ENCODE measurements at regions of chr17 and their contacts with region 1.

Region 1: DNA sequence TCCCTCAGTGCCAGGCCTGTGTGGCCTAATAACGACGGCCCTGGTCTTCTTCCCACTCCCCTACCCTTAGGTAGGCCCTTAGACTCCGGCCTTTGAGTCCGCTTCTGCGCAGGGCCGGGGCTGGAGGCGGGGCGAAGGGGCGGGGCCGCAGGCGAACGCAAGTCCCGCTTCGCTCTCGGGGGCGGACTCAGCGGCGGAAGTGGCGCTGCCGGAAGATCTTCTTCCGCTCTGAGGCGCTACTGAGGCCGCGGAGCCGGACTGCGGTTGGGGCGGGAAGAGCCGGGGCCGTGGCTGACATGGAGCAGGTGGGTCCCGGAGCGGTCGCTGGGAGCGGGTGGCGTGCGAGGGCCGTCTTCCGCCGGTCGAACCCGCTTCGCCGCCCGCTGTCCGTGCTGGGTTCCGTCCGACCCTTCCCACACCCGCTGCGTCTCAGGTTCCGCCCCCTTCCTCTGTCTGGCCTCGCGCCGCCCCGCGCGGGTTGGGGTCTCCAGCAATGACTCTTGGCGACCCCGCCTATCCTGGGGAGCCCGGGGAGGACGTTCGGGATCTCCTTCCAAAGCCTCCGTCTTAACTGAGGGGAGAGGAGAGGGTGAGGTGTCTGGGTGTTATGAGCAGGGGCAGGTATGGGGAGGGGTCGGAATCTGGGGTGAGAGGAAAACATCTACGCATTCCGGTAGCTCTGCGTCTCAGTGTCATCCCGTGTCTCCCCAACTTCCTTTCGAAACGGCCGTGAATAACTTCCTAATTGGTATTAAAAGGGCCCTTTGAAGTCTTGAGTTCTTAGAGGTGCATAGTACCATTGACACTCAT is at the start of gene STARD3:
- DNase-seq: peak; percentile 96
- H3K4me3 ChIP-seq: peak within 1 kb of the TSS; percentile 71 to 82 (median 74)
- H3K27ac ChIP-seq: peak within 1 kb of the TSS; percentile 90 to 93 (median 90)
- H3K4me1 ChIP-seq: peaks cover 31 to 85% (median 59%) of the 10 kb centered on the region in 4 donors
- H3K27me3 ChIP-seq: no peaks in the 10 kb centered on the region
- CTCF ChIP-seq: peak in 2 of 5 experiments; percentile 14 to 48
- EP300 ChIP-seq: no peak
- POLR2A ChIP-seq: peak; percentile 78
- total RNA-seq, gene STARD3: 63.5 to 193 (median 73.2) TPM

Region 2: GRCh38 chr17:39730095-39730921 is 93.2 kb after region 1 on chr17 and contains the start of gene MIEN1:
- in situ Hi-C with region 1: loop called in 1 of 4 experiments (anchors 25 kb)
- intact Hi-C with region 1: no loop called
- DNase-seq: peak; percentile 95
- H3K4me3 ChIP-seq: peak within 1 kb of the TSS; percentile 69 to 90 (median 82)
- H3K27ac ChIP-seq: peak within 1 kb of the TSS; percentile 86 to 95 (median 91)
- H3K4me1 ChIP-seq: peaks cover 8 to 13% (median 10%) of the 10 kb centered on the region in 4 donors
- H3K27me3 ChIP-seq: no peaks in the 10 kb centered on the region
- CTCF ChIP-seq: peak; percentile 86 to 97 (median 93)
- EP300 ChIP-seq: peak; percentile 57
- POLR2A ChIP-seq: peak; percentile 91
- total RNA-seq, gene MIEN1: 99.3 to 215 (median 109) TPM

Region 3: DNA sequence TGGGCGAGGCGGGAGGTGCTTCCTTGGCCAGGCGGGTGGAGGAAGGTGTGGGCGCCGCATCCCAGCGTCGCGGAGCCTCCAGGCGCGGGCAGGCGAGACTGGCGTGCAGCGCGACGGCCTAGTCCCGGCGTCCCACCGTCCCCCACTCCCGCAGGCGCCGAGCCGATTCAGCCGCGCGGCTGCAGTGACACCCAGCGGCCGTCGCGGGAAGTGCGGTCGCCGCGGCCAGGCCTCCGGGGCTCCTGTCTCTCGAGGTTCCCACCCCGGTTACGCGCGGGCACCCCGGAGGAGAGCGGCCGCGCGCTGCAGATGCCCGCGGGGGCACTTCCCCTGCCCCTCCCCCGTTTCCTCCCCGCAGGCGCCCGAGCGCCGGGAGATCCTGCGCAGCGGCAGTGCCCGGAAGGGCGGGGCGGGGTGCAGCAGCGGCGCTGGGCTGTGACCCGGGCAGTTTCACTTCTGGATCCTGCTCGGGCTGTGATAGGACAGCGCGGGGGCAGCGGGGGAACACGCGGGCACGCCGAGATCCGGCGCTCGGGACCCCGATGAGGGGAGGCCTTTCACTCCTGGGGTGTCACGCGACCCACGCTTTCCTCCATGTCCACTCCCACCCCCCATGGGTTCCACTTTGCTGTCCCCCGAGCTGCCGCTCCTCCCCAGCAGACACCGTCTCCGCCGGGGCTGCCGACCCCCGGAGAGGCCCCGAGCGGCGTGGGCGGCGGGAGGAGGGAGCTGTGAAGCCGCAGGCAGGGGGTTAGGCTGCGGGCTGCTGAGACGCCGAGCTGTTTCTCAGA is 117.2 kb after region 1 on chr17:
- in situ Hi-C with region 1: loop called in 1 of 4 experiments (anchors 25 kb)
- intact Hi-C with region 1: loop called (anchors 10 kb)
- DNase-seq: peak; percentile 97
- H3K4me3 ChIP-seq: peak overlapping the region; percentile 60 to 91 (median 71)
- H3K27ac ChIP-seq: peak overlapping the region; percentile 91 to 98 (median 96)
- H3K4me1 ChIP-seq: peaks cover 6 to 24% (median 14%) of the 10 kb centered on the region in 4 donors
- H3K27me3 ChIP-seq: peaks cover 4% of the 10 kb centered on the region
- CTCF ChIP-seq: peak; percentile 94 to 99 (median 99)
- EP300 ChIP-seq: no peak
- POLR2A ChIP-seq: peak; percentile 86

Region 4: GRCh38 chr17:39794249-39794970 is 157.3 kb after region 1 on chr17:
- in situ Hi-C with region 1: no loop called
- intact Hi-C with region 1: no loop called
- DNase-seq: peak; percentile 58
- H3K4me3 ChIP-seq: no peak overlapping the region
- H3K27ac ChIP-seq: peak overlapping the region in 3 of 4 donors; percentile 18 to 47 (median 36)
- H3K4me1 ChIP-seq: no peaks in the 10 kb centered on the region
- H3K27me3 ChIP-seq: peaks cover 12% of the 10 kb centered on the region
- CTCF ChIP-seq: no peak
- EP300 ChIP-seq: no peak
- POLR2A ChIP-seq: no peak

Region 5: GRCh38 chr17:39980351-39981206 is 343.4 kb after region 1 on chr17 and contains the start of gene PSMD3:
- in situ Hi-C with region 1: no loop called
- intact Hi-C with region 1: no loop called
- DNase-seq: peak; percentile 99
- H3K4me3 ChIP-seq: peak within 1 kb of the TSS; percentile 87 to 99 (median 92)
- H3K27ac ChIP-seq: peak within 1 kb of the TSS; percentile 94 to 99 (median 98)
- H3K4me1 ChIP-seq: peaks cover 17 to 28% (median 20%) of the 10 kb centered on the region in 4 donors
- H3K27me3 ChIP-seq: peaks cover 6% of the 10 kb centered on the region
- CTCF ChIP-seq: peak; percentile 65 to 98 (median 76)
- EP300 ChIP-seq: no peak
- POLR2A ChIP-seq: peak; percentile 93
- total RNA-seq, gene PSMD3: 80.7 to 117 (median 112) TPM

Measured in transverse colon (tissue), 4 donors.